Vagina (tissue), 2 donors: ENCODE measurements at regions of chr17 and their contacts with region 1.

Region 1: DNA sequence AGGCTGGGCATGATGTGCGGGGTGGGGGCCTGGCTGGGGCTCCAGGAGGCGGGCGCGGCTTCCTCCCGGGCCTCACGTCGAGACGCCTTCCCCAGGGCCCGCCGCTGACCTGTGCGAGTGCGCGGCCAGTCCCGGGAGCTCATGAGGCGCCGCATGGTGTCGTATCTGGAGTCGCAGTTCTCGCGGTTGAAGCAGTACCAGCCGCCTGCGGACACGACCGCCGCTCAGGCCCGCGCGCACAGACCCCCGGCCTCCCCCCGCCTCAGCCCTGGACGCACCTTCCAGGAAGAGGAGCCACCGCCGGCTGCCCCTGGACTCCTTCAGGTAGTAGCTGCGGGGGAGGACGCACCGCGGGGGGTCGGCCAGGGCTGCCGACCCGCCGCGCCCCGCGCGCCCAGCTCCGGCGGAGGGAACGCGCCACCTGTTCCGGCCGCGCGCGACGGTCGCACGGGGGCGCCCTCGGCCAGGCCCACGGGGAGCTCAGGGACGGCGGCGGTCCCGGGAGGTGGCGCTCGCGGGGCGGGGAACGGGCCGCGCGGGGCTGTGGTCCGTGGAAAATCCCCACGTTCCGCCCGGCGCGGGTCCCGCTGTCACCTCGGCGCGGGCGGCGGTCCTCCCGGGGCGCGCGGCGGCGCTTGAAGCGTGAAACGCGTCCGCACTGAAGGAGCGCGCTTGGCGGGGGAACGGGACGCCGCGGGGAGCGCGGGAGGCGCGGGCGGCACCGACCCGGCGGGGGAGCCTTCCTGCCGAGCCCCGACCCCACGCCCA is 1.4 kb downstream of the NOTUM start:
- DNase-seq: no peak
- H3K4me3 ChIP-seq: peak overlapping the region; percentile 34 to 40
- H3K27ac ChIP-seq: no peak overlapping the region
- H3K4me1 ChIP-seq: peaks cover 8% of the 10 kb centered on the region
- H3K27me3 ChIP-seq: peaks cover 14% of the 10 kb centered on the region
- CTCF ChIP-seq: peak; percentile 37 to 68 (median 58)
- POLR2A ChIP-seq: no peak

Region 2: GRCh38 chr17:82013341-82013740 is 53.8 kb after region 1 on chr17:
- intact Hi-C with region 1: loop called (anchors 5 kb)
- DNase-seq: no peak
- H3K4me3 ChIP-seq: no peak overlapping the region
- H3K27ac ChIP-seq: peak overlapping the region; percentile 75
- H3K4me1 ChIP-seq: peaks cover 33% of the 10 kb centered on the region
- H3K27me3 ChIP-seq: no peaks in the 10 kb centered on the region
- CTCF ChIP-seq: no peak
- POLR2A ChIP-seq: no peak

Region 3: GRCh38 chr17:82022981-82023374 is 63.4 kb after region 1 on chr17 and contains the start of gene LRRC45:
- intact Hi-C with region 1: loop called (anchors 2 kb)
- DNase-seq: peak; percentile 99 to 100
- H3K4me3 ChIP-seq: peak within 1 kb of the TSS; percentile 82 to 84
- H3K27ac ChIP-seq: peak within 1 kb of the TSS; percentile 54
- H3K4me1 ChIP-seq: peaks cover 48% of the 10 kb centered on the region
- H3K27me3 ChIP-seq: no peaks in the 10 kb centered on the region
- CTCF ChIP-seq: no peak
- POLR2A ChIP-seq: no peak
- total RNA-seq, gene LRRC45: 14.0 TPM

Region 4: GRCh38 chr17:82153745-82154375 is 194.3 kb after region 1 on chr17:
- intact Hi-C with region 1: loop called (anchors 10 kb)
- DNase-seq: no peak
- H3K4me3 ChIP-seq: no peak overlapping the region
- H3K27ac ChIP-seq: no peak overlapping the region
- H3K4me1 ChIP-seq: peaks cover 22% of the 10 kb centered on the region
- H3K27me3 ChIP-seq: no peaks in the 10 kb centered on the region
- CTCF ChIP-seq: peak; percentile 78 to 96 (median 78)
- POLR2A ChIP-seq: no peak

Region 5: GRCh38 chr17:82170412-82170961 is 210.9 kb after region 1 on chr17:
- intact Hi-C with region 1: no loop called
- DNase-seq: no peak
- H3K4me3 ChIP-seq: no peak overlapping the region
- H3K27ac ChIP-seq: no peak overlapping the region
- H3K4me1 ChIP-seq: no peaks in the 10 kb centered on the region
- H3K27me3 ChIP-seq: no peaks in the 10 kb centered on the region
- CTCF ChIP-seq: no peak
- POLR2A ChIP-seq: no peak